K562 (cell line): ENCODE measurements at regions of chr7 and their contacts with region 1.

Region 1: GRCh38 chr7:135620980-135621850 is 41.1 kb upstream of the STMP1 start:
- DNase-seq: peak; percentile 39 to 73 (median 49)
- ATAC-seq: peak; percentile 84
- H3K4me3 ChIP-seq: no peak overlapping the region
- H3K27ac ChIP-seq: no peak overlapping the region
- H3K4me1 ChIP-seq: no peaks in the 10 kb centered on the region
- H3K27me3 ChIP-seq: no peaks in the 10 kb centered on the region
- CTCF ChIP-seq: peak; percentile 59 to 90 (median 79); a peak in 5 of 6 replicates
- EP300 ChIP-seq: no peak
- POLR2A ChIP-seq: no peak
- RAD21 ChIP-seq: peak; percentile 82 to 91

Region 2: DNA sequence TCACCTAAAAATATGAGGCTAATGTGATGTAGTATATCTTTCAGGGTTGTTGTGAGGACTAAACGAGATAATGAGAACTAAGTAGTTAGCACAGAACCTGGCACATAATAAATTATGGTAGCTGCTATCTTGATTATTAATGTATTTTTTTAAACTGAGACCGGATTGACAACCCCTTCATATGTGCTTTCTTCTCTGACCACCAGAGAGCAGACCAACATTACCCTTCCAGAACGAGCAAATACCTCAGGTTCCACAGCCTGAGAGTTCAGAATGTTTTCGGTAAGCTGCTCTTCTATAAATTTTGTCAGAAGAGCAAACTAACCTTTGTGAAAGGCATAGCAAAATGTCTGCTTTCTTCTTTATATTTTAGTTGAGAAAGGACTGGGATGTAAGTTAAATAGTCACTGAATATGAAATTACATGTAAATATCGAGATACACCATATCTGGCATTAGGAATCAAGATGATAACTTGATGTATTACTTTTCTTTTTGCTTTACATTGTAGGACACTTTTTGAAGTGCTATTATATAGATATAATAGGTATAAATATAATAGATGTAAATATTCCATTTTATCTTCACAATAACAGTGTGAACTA is 988.2 kb before region 1 on chr7:
- CTCF ChIA-PET with region 1: no interaction called
- POLR2A ChIA-PET with region 1: no interaction called
- in situ Hi-C with region 1: no loop called
- intact Hi-C with region 1: no loop called
- DNase-seq: peak; percentile 54 to 79 (median 68)
- ATAC-seq: peak; percentile 94
- H3K4me3 ChIP-seq: no peak overlapping the region
- H3K27ac ChIP-seq: no peak overlapping the region
- H3K4me1 ChIP-seq: peaks cover 0 to 6% of the 10 kb centered on the region in 2 experiments; a peak in 2 of 5 replicates
- H3K27me3 ChIP-seq: peaks cover 0 to 5% of the 10 kb centered on the region in 2 experiments; a peak in 1 of 5 replicates
- CTCF ChIP-seq: peak; percentile 84 to 97 (median 88)
- EP300 ChIP-seq: no peak
- POLR2A ChIP-seq: no peak
- RAD21 ChIP-seq: peak; percentile 95 to 98

Region 3: DNA sequence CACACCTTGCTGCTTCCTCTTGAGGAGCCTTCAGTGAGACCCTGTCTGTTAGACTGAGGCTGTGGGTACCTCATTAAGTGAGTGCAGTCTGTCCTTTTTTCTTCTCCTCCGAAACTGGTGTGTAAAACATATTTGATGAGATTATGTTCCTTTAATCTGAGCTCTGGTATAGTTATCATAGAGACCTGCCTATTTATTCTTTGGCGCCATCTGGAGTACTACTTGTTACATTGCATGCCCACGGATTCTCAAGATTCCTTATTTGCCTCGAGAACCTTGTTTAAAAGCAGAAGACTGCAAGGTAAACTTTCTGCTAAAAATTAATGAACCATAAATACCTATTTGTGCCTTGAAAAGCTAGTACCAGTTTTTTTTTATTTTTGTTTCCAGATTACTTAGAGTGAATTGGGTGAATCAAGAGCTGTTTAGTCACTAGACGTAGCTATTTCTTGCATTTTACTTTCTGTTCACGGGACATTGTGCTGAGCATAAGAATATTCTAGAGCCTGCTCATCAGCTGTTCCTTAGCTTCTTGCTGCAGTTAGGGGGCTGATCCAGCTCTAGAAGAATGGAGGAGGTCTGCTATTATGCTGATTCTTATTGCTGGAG is 24.2 kb after region 1 on chr7:
- CTCF ChIA-PET with region 1: interaction called, 11 read pairs
- POLR2A ChIA-PET with region 1: no interaction called
- in situ Hi-C with region 1: no loop called
- intact Hi-C with region 1: no loop called
- DNase-seq: peak; percentile 42 to 61 (median 52)
- ATAC-seq: peak; percentile 81
- H3K4me3 ChIP-seq: no peak overlapping the region
- H3K27ac ChIP-seq: no peak overlapping the region
- H3K4me1 ChIP-seq: peaks cover under 1 to 6% of the 10 kb centered on the region in 2 experiments; a peak in 2 of 5 replicates
- H3K27me3 ChIP-seq: no peaks in the 10 kb centered on the region
- CTCF ChIP-seq: peak; percentile 64 to 82 (median 70); a peak in 5 of 6 replicates
- EP300 ChIP-seq: no peak
- POLR2A ChIP-seq: no peak
- RAD21 ChIP-seq: peak; percentile 69 to 72

Region 4: GRCh38 chr7:135672560-135673359 is 51.5 kb after region 1 on chr7:
- CTCF ChIA-PET with region 1: no interaction called
- POLR2A ChIA-PET with region 1: no interaction called
- in situ Hi-C with region 1: no loop called
- intact Hi-C with region 1: loop called (anchors 2 kb)
- DNase-seq: peak; percentile 64 to 78 (median 69)
- ATAC-seq: peak; percentile 91
- H3K4me3 ChIP-seq: no peak overlapping the region
- H3K27ac ChIP-seq: no peak overlapping the region
- H3K4me1 ChIP-seq: peaks cover 0 to 3% of the 10 kb centered on the region in 2 experiments; a peak in 1 of 5 replicates
- H3K27me3 ChIP-seq: no peaks in the 10 kb centered on the region
- CTCF ChIP-seq: peak; percentile 82 to 92 (median 89)
- EP300 ChIP-seq: no peak; the same call in 1 of the 2 replicates
- POLR2A ChIP-seq: no peak
- RAD21 ChIP-seq: peak; percentile 79 to 80

Region 5: DNA sequence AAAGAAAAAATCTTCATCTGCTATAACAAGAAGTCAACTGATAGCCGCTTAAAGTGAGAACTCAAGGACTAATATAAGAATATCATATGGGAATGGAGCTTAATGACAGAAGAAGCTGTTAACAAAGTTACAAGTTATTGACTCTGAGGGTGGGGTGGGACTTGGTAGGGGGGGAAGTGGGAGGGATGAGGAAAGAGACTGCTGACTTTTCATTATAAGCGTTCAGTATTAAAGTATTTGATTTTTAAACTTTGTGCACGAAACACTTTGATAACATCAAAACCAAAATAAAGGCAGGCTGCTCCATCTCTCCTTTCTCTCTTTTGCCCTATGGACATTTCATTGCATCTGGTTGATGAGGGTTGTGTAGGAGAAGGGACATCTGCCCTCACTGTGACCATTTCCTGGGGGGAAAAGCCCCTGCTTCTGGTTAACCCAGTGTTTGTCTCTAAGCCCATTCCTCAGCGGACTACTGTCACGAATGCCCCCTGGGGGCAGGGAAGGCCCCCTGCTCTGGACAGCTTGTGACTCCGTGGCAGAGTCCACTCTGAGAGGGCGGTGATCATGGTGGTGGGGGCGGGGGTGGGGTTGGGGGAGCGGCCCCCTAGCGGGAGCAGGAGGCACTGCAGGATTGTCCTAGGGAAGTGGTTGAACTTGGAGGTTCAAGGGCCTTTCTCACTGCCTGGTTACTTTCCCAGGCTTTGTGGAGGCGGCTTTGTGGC is 89.4 kb after region 1 on chr7:
- CTCF ChIA-PET with region 1: no interaction called
- POLR2A ChIA-PET with region 1: no interaction called
- in situ Hi-C with region 1: no loop called
- intact Hi-C with region 1: loop called (anchors 1 kb)
- DNase-seq: peak; percentile 78 to 93 (median 92)
- ATAC-seq: peak; percentile 88
- H3K4me3 ChIP-seq: peak overlapping the region; percentile 33
- H3K27ac ChIP-seq: no peak overlapping the region; the same call in 2 of the 3 replicates
- H3K4me1 ChIP-seq: peaks cover 2 to 14% of the 10 kb centered on the region in 2 experiments; a peak in 3 of 5 replicates
- H3K27me3 ChIP-seq: peaks cover 25 to 40% of the 10 kb centered on the region in 2 experiments; a peak in 4 of 5 replicates
- CTCF ChIP-seq: peak; percentile 63 to 72 (median 68)
- EP300 ChIP-seq: no peak
- POLR2A ChIP-seq: no peak
- RAD21 ChIP-seq: no peak

Region 6: GRCh38 chr7:136228171-136228570 is 607.0 kb after region 1 on chr7:
- CTCF ChIA-PET with region 1: no interaction called
- POLR2A ChIA-PET with region 1: no interaction called
- in situ Hi-C with region 1: no loop called
- intact Hi-C with region 1: no loop called
- DNase-seq: no peak
- ATAC-seq: peak; percentile 28; the same call in 1 of the 3 replicates
- H3K4me3 ChIP-seq: no peak overlapping the region
- H3K27ac ChIP-seq: no peak overlapping the region
- H3K4me1 ChIP-seq: no peaks in the 10 kb centered on the region
- H3K27me3 ChIP-seq: no peaks in the 10 kb centered on the region
- CTCF ChIP-seq: no peak
- EP300 ChIP-seq: no peak
- POLR2A ChIP-seq: no peak
- RAD21 ChIP-seq: no peak